Activated naive CD4-positive, alpha-beta T cell treated with anti-CD3 and anti-CD28 coated beads, Interleukin-2, amount 10 ng/mL, durations not matched to agents 7 days and 5 days (primary cell): ENCODE measurements at regions of chr6 and their contacts with region 1.

Region 1: GRCh38 chr6:25263657-25264056 is 15.5 kb upstream of the CARMIL1 start:
- DNase-seq: no peak
- H3K4me3 Mint-ChIP-seq: no peak overlapping the region
- H3K27ac Mint-ChIP-seq: no peak overlapping the region
- H3K4me1 Mint-ChIP-seq: peaks cover 2% of the 10 kb centered on the region
- H3K27me3 Mint-ChIP-seq: peaks cover 12% of the 10 kb centered on the region

Region 2: DNA sequence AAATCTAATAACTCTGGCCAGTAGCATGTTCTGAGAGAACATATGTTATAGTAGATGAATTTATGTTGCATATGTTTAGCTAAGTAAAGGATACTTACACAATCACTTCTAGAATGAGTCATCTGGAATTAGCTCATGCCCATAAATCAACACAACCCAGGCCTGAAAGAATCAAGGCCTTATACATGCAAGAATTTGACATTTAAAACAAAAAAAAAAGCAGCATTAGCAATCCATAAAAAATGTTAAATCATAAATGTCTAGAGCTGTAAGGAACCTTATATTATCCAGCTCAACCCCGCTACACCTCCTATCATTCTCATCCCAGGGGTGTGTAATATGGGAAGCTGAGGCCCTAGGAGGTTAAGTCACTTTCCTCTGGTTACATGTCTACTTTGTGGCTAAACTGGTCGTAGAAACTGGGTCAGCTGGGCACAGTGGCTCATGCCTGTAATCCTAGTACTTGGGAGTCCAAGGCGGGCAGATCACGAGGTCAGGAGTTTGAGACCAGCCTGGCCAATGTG is 89.6 kb before region 1 on chr6:
- CTCF ChIA-PET with region 1: no interaction called
- DNase-seq: no peak
- H3K4me3 Mint-ChIP-seq: no peak overlapping the region
- H3K27ac Mint-ChIP-seq: no peak overlapping the region
- H3K4me1 Mint-ChIP-seq: peaks cover 32% of the 10 kb centered on the region
- H3K27me3 Mint-ChIP-seq: peaks cover 4% of the 10 kb centered on the region

Region 3: GRCh38 chr6:25193460-25194171 is 70.0 kb before region 1 on chr6:
- CTCF ChIA-PET with region 1: no interaction called
- DNase-seq: no peak
- H3K4me3 Mint-ChIP-seq: no peak overlapping the region
- H3K27ac Mint-ChIP-seq: no peak overlapping the region
- H3K4me1 Mint-ChIP-seq: no peaks in the 10 kb centered on the region
- H3K27me3 Mint-ChIP-seq: peaks cover 9% of the 10 kb centered on the region

Region 4: DNA sequence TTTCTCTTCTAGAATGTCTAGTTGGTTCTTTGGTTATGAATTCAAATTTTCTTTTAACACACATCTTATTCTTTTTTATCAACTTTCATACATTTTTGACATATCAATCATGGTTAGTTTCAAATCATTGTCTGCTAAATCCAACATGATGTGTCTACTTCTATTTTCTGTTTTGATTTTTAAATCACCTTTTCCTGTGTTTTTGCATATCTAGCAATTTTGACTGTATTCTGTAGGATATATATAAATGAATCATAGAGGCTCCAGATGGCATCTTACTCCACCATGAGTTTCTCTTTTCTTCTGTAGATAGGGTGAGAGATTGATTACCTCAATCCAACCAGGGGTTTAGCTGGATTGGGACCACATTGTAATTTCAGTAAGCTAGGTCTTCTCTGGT is 18.8 kb before region 1 on chr6:
- CTCF ChIA-PET with region 1: interaction called, 11 read pairs
- DNase-seq: no peak
- H3K4me3 Mint-ChIP-seq: no peak overlapping the region
- H3K27ac Mint-ChIP-seq: no peak overlapping the region
- H3K4me1 Mint-ChIP-seq: no peaks in the 10 kb centered on the region
- H3K27me3 Mint-ChIP-seq: no peaks in the 10 kb centered on the region

Region 5: GRCh38 chr6:25278914-25279747 is 15.5 kb after region 1 on chr6 and contains the start of gene CARMIL1:
- CTCF ChIA-PET with region 1: interaction called, 13 read pairs
- DNase-seq: peak; percentile 84
- H3K4me3 Mint-ChIP-seq: peak within 1 kb of the TSS; percentile 84
- H3K27ac Mint-ChIP-seq: peak within 1 kb of the TSS; percentile 68
- H3K4me1 Mint-ChIP-seq: peaks cover 24% of the 10 kb centered on the region
- H3K27me3 Mint-ChIP-seq: peaks cover 27% of the 10 kb centered on the region

Region 6: GRCh38 chr6:25556516-25556915 is 292.9 kb after region 1 on chr6:
- CTCF ChIA-PET with region 1: interaction called, 56 read pairs
- DNase-seq: peak; percentile 87
- H3K4me3 Mint-ChIP-seq: no peak overlapping the region
- H3K27ac Mint-ChIP-seq: no peak overlapping the region
- H3K4me1 Mint-ChIP-seq: no peaks in the 10 kb centered on the region
- H3K27me3 Mint-ChIP-seq: no peaks in the 10 kb centered on the region